Keratinocyte (primary cell): ENCODE measurements at regions of chr3 and their contacts with region 1.

Region 1: DNA sequence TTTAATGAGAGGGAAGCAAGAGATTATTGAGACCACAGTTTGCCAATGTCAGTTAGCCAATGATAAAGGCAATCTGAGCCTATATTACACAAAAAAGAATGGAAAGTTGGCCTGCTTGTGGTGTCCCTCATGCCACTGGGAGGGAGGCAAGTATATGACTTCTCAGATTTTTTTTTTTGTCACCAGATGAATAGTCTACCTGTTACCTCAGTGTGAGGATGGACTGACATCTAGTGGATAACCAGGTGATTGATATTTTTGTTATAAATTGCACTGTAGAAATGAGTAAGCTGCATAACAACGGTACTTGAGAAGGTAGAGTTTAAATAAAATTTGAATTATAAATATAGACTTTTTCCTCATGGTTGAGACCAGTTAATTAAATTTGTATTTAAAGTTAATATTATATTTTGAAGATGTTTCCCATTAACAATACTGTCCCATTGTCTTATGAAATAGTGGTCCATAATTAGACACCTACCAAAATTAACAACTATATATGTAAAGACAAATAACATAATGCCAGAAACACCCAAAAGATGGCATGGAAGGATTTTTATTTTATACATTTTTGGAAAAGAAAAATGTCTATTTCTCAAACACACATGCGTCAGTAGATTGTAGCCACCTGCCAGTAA is 237.8 kb upstream of the GADL1 start:
- DNase-seq: peak; percentile 23
- H3K4me3 ChIP-seq: no peak overlapping the region
- H3K27ac ChIP-seq: no peak overlapping the region
- H3K4me1 ChIP-seq: no peaks in the 10 kb centered on the region
- H3K27me3 ChIP-seq: no peaks in the 10 kb centered on the region
- CTCF ChIP-seq: peak; percentile 20 to 63 (median 51)

Region 2: GRCh38 chr3:30768703-30769685 is 363.3 kb before region 1 on chr3:
- dilution Hi-C with region 1: loop called (anchors 25 kb)
- DNase-seq: no peak
- H3K4me3 ChIP-seq: no peak overlapping the region
- H3K27ac ChIP-seq: no peak overlapping the region
- H3K4me1 ChIP-seq: peaks cover 12% of the 10 kb centered on the region
- H3K27me3 ChIP-seq: no peaks in the 10 kb centered on the region
- CTCF ChIP-seq: peak; percentile 79 to 88 (median 82)

Region 3: DNA sequence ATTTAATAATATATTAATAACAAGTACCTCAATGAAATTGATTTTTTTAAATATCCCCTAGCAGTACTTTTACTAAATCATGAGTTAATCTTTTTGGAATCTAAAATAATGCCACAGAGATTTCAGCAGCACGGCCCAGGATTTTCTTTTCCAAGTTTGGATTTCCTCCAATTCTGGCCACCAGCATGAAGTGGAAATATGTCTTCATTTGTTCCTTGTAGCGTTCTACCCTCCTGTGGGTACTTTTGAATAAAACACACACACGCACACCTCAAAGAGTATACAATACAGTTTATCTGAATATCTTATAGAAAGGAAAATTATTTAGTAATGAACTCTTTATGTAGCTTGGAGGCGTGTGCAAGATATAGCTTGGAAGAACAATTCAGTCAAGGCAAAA is 275.4 kb after region 1 on chr3:
- dilution Hi-C with region 1: no loop called
- DNase-seq: no peak
- H3K4me3 ChIP-seq: no peak overlapping the region
- H3K27ac ChIP-seq: no peak overlapping the region
- H3K4me1 ChIP-seq: no peaks in the 10 kb centered on the region
- H3K27me3 ChIP-seq: peaks cover 4% of the 10 kb centered on the region
- CTCF ChIP-seq: no peak